Endothelial cell of umbilical vein (primary cell): ENCODE measurements at regions of chr19 and their contacts with region 1.

Region 1: GRCh38 chr19:44212250-44212865 is at the start of gene ZNF227:
- DNase-seq: peak; percentile 97
- H3K4me3 ChIP-seq: peak within 1 kb of the TSS; percentile 82 to 99 (median 98)
- H3K27ac ChIP-seq: peak within 1 kb of the TSS; percentile 71
- H3K4me1 ChIP-seq: peaks cover 11% of the 10 kb centered on the region
- H3K27me3 ChIP-seq: no peaks in the 10 kb centered on the region
- CTCF ChIP-seq: no peak
- POLR2A ChIP-seq: peak; percentile 65
- total RNA-seq, gene ZNF227: 17.2 and 17.8 TPM in 2 replicates

Region 2: GRCh38 chr19:43983912-43984686 is 228.3 kb before region 1 on chr19 and contains the start of gene ZNF155:
- CTCF ChIA-PET with region 1: no interaction called
- POLR2A ChIA-PET with region 1: no interaction called
- dilution Hi-C with region 1: no loop called
- intact Hi-C with region 1: loop called (anchors 5 kb)
- DNase-seq: peak; percentile 95
- H3K4me3 ChIP-seq: peak within 1 kb of the TSS; percentile 32 to 75 (median 68)
- H3K27ac ChIP-seq: peak within 1 kb of the TSS; percentile 23
- H3K4me1 ChIP-seq: peaks cover 6% of the 10 kb centered on the region
- H3K27me3 ChIP-seq: no peaks in the 10 kb centered on the region
- CTCF ChIP-seq: no peak
- POLR2A ChIP-seq: peak; percentile 39
- total RNA-seq, gene ZNF155: 5.9 and 7.6 TPM in 2 replicates

Region 3: GRCh38 chr19:44164673-44165512 is 47.5 kb before region 1 on chr19 and contains the start of gene ZNF226:
- CTCF ChIA-PET with region 1: interaction called, 5 read pairs
- POLR2A ChIA-PET with region 1: interaction called, 9 read pairs
- dilution Hi-C with region 1: no loop called
- intact Hi-C with region 1: loop called (anchors 1 kb)
- DNase-seq: peak; percentile 98
- H3K4me3 ChIP-seq: peak within 1 kb of the TSS; percentile 56 to 87 (median 66)
- H3K27ac ChIP-seq: peak within 1 kb of the TSS; percentile 74
- H3K4me1 ChIP-seq: peaks cover 3% of the 10 kb centered on the region
- H3K27me3 ChIP-seq: no peaks in the 10 kb centered on the region
- CTCF ChIP-seq: no peak
- POLR2A ChIP-seq: no peak
- total RNA-seq, gene ZNF226: 19.7 and 19.8 TPM in 2 replicates

Region 4: DNA sequence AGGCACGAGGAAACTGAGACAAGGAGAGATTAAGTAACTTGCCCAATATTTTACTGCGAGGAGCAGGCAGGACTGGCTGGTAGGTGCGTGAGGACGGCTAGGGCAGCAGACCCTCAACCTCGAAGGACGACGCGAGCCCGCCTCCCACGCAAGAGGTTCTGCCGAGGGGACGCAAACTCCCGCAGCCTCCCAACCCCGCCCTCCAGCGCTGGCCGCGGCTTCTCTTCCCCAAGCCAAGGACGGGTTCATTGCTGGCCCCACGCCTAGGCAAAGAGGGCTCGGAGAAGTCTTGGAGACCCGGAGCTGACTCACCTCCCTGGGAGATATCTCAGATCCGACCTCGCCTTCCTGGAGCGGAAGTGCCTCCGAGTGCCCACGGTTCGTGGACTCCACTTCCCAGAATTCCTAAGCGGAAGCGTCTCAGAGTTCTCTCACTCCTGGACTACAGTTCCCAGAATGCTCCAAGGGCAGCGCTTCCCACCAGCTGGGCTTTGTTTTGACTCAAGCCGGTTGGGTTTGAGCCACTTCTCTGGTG is 92.4 kb after region 1 on chr19 and contains the start of gene ZNF235:
- CTCF ChIA-PET with region 1: interaction called, 5 read pairs
- POLR2A ChIA-PET with region 1: no interaction called
- dilution Hi-C with region 1: no loop called
- intact Hi-C with region 1: loop called (anchors 1 kb)
- DNase-seq: peak; percentile 97
- H3K4me3 ChIP-seq: peak within 1 kb of the TSS; percentile 76 to 95 (median 82)
- H3K27ac ChIP-seq: peak within 1 kb of the TSS; percentile 63
- H3K4me1 ChIP-seq: peaks cover 5% of the 10 kb centered on the region
- H3K27me3 ChIP-seq: no peaks in the 10 kb centered on the region
- CTCF ChIP-seq: no peak
- POLR2A ChIP-seq: peak; percentile 51
- total RNA-seq, gene ZNF235: 5.2 TPM in 2 replicates

Region 5: GRCh38 chr19:44401139-44402115 is 189.1 kb after region 1 on chr19 and contains the start of gene ZNF285:
- CTCF ChIA-PET with region 1: no interaction called
- POLR2A ChIA-PET with region 1: no interaction called
- dilution Hi-C with region 1: no loop called
- intact Hi-C with region 1: loop called (anchors 1 kb)
- DNase-seq: peak; percentile 98
- H3K4me3 ChIP-seq: peak within 1 kb of the TSS; percentile 46 to 66 (median 55)
- H3K27ac ChIP-seq: no peak within 1 kb of the TSS
- H3K4me1 ChIP-seq: no peaks in the 10 kb centered on the region
- H3K27me3 ChIP-seq: no peaks in the 10 kb centered on the region
- CTCF ChIP-seq: no peak
- POLR2A ChIP-seq: peak; percentile 19
- total RNA-seq, gene ZNF285: 3.6 and 4.6 TPM in 2 replicates